Transverse colon (tissue), 4 donors: ENCODE measurements at regions of chr1 and their contacts with region 1.

Region 1: DNA sequence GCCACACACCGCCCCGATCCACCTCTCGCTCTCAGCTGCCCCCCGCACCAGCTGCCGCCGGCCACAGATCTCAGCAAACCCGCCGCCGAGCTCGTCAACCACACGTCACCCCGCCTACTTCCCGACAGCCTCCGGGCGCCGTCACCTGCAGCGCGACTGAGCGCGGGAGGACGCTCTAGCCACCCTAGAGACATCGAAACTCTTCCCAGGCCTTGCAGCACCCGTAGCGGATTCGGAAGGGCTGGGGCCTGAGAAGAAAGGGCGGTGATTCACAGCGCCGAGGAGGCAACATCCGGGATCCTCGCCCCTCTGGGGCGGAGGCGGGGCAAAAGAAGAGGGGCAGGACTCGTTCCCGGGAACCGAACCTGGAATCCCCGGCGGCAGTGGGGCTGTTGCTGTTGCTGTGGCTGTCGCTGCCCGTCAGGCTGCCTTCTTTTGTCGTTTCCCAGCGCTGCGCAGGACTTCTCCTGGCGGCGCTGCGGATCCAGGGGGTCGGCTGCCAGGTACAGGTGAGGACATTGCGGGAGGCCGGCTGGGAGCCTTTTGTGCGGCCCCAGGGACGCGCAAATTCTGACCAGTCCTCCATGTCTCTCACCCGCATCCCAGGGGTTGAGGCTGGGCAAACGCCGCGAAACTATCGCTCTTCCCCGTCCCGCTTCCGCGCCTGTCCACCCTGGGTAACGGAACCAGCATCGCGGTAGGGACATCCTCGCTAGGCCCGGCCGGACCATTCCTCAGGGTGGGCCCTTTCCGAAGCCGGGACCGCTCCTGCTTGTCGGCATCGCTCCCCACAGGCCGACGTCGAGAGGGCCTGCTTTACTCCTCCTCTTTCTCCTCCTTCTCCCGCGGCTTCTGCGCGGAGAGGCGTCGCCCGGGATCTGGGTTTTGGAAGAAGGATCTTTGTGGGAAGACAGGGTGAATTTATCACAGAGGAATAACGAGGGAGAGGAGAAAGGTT is at the starts of genes RO60 and UCHL5:
- DNase-seq: peak; percentile 97
- H3K4me3 ChIP-seq: peak within 1 kb of the TSS; percentile 77 to 91 (median 82)
- H3K27ac ChIP-seq: peak within 1 kb of the TSS; percentile 96 to 98 (median 96)
- H3K4me1 ChIP-seq: peaks cover 8 to 40% (median 31%) of the 10 kb centered on the region in 4 donors
- H3K27me3 ChIP-seq: no peaks in the 10 kb centered on the region
- CTCF ChIP-seq: no peak
- EP300 ChIP-seq: peak; percentile 48
- POLR2A ChIP-seq: peak; percentile 85
- total RNA-seq, gene RO60: 11.6 to 67.2 (median 62.4) TPM
- total RNA-seq, gene UCHL5: 13.7 to 35.0 (median 26.0) TPM

Region 2: GRCh38 chr1:192998536-192998935 is 61.0 kb before region 1 on chr1:
- in situ Hi-C with region 1: no loop called
- intact Hi-C with region 1: no loop called
- DNase-seq: no peak
- H3K4me3 ChIP-seq: no peak overlapping the region
- H3K27ac ChIP-seq: no peak overlapping the region
- H3K4me1 ChIP-seq: no peaks in the 10 kb centered on the region
- H3K27me3 ChIP-seq: no peaks in the 10 kb centered on the region
- CTCF ChIP-seq: no peak
- EP300 ChIP-seq: no peak
- POLR2A ChIP-seq: no peak

Region 3: GRCh38 chr1:193013005-193013404 is 46.5 kb before region 1 on chr1:
- in situ Hi-C with region 1: no loop called
- intact Hi-C with region 1: no loop called
- DNase-seq: no peak
- H3K4me3 ChIP-seq: no peak overlapping the region
- H3K27ac ChIP-seq: peak overlapping the region; percentile 4 to 58 (median 50)
- H3K4me1 ChIP-seq: peaks cover 0 to 42% (median 19%) of the 10 kb centered on the region in 4 donors
- H3K27me3 ChIP-seq: no peaks in the 10 kb centered on the region
- CTCF ChIP-seq: no peak
- EP300 ChIP-seq: no peak
- POLR2A ChIP-seq: no peak

Region 4: DNA sequence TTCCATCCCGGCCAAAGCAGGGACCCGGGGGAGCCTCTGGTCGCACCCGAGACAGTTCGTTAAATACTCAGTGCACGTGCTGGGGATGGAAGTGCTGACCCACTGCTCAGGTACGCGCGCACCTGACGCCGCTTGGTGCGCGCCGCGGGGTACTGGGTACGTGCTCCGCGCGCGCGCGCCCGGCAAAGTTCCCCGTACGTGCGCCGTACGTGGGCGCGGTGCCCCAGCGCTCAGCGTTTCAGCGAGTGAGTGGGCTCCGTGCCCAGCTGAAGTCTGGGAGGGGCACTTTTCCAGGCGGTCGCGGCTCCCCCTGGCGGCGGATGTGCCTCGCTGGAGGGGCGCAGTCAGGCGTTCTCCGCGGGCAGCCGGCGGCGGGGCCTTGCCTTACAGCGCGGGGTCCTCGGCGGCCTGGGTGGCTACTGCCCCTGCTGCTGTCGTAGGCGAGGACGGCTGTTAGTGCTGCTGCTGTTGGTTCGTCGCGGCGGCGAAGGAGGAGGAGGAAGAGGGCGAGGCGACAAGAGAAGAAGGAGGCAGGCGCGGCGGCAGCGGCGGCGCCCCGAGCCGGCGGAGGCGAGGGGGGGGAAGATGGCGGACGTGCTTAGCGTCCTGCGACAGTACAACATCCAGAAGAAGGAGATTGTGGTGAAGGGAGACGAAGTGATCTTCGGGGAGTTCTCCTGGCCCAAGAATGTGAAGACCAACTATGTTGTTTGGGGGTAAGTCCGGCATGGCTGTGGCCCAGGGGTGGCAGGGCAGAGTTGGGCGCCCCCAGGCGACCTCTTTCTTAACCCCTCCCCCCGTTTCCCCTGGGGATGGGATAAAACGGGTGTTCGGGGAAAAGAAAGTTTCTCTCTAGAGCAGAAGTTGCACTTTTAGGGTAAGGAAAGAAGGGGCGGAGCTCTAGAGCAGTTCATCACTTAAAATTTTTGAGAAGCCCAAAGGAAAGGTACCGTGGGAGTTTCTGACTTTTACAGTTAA is 62.4 kb after region 1 on chr1 and contains the start of gene CDC73:
- in situ Hi-C with region 1: loop called in 1 of 4 experiments (anchors 10 kb)
- intact Hi-C with region 1: no loop called
- DNase-seq: peak; percentile 99
- H3K4me3 ChIP-seq: peak within 1 kb of the TSS; percentile 41 to 99 (median 81)
- H3K27ac ChIP-seq: peak within 1 kb of the TSS; percentile 94 to 99 (median 96)
- H3K4me1 ChIP-seq: peaks cover 7 to 24% (median 10%) of the 10 kb centered on the region in 4 donors
- H3K27me3 ChIP-seq: no peaks in the 10 kb centered on the region
- CTCF ChIP-seq: peak; percentile 87 to 99 (median 94)
- EP300 ChIP-seq: peak; percentile 76
- POLR2A ChIP-seq: peak; percentile 95
- total RNA-seq, gene CDC73: 26.2 to 208 (median 54.6) TPM